ENCODE measurements at regions of chr2 and their contacts with region 1.

Region 1: DNA sequence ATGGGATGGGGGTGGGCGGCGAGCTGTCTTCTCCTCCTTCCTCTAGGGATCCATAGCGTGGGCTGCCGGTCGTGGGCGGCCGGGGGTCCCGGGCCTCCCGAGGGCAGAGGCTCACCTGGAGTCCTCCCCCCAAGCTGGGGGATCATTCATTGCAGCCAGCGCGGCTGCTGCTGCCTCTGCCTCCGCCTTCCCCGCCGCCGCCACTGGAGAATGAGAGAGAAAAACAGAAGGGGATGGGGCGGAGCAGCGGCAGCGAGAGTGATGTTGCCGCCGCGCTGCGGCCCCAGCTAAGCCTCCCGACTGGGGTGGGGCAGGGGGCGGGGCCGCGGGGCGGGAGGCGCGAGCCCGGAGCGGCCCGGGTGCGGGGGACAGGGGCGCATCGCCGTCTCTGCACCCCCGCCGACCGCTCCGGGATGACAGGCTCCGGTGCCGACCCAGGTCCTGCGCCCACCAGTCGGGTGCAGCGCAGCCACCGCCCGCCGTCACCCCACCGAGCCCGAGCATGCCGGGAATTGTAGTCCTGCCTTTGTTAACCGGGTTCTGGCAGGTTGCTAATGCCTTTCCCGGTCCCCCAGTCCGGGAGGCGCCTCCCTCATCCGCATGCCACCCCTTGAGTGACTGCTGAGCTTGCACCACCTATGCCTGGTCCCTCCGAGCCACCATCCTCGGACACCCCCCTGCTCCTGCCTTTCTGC is at the start of gene KIF3C:
- DNase-seq: peak; percentile 89
- ATAC-seq: peak; percentile 82
- H3K4me3 Mint-ChIP-seq: peak within 1 kb of the TSS; percentile 85
- H3K27ac Mint-ChIP-seq: peak within 1 kb of the TSS; percentile 95
- H3K4me1 Mint-ChIP-seq: peaks cover 42% of the 10 kb centered on the region
- H3K27me3 Mint-ChIP-seq: no peaks in the 10 kb centered on the region; the same call in 1 of the 2 replicates
- CTCF ChIP-seq: no peak
- total RNA-seq, gene KIF3C: 48.1 to 60.1 TPM (median 55.8 TPM) in 3 replicates

Region 2: GRCh38 chr2:26033818-26034636 is 51.6 kb after region 1 on chr2 and contains the start of gene RAB10:
- CTCF ChIA-PET with region 1: no interaction called
- POLR2A ChIA-PET with region 1: interaction called, 11 read pairs
- DNase-seq: peak; percentile 99
- ATAC-seq: peak; percentile 91
- H3K4me3 Mint-ChIP-seq: peak within 1 kb of the TSS; percentile 92
- H3K27ac Mint-ChIP-seq: peak within 1 kb of the TSS; percentile 98
- H3K4me1 Mint-ChIP-seq: peaks cover 23% of the 10 kb centered on the region
- H3K27me3 Mint-ChIP-seq: no peaks in the 10 kb centered on the region
- CTCF ChIP-seq: no peak
- total RNA-seq, gene RAB10: 127 to 142 TPM (median 132 TPM) in 3 replicates